Activated B cell treated with CpG ODN at 0.5 μM for 24 hours (primary cell): ENCODE measurements at regions of chr22 and their contacts with region 1.

Region 1: DNA sequence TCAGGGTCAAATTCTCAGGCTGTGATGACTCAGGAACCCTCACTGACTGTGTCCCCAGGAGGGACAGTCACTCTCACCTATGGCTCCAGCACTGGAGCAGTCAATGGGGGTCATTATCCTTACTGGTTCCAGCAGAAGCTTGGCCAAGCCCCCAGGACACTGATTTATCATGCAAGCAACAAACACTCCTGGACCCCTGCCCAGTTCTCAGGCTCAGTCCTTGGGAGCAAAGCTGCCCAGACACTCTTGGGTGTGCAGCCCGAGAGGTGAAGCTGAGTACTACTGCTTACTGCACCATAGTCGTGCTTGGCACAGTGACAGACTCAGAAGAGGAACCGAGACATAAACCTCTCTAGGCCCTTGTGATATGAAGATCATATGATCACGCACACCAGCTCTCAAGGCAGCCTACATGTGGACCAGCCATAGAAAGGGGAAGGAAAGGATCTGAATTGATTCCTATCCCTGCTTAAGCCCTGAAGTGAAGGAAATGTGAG is 58.2 kb downstream of the ZNF280B start:
- DNase-seq: peak; percentile 46
- ATAC-seq: peak; percentile 97
- H3K4me3 Mint-ChIP-seq: peak overlapping the region; percentile 63
- H3K27ac Mint-ChIP-seq: peak overlapping the region; percentile 90
- H3K4me1 Mint-ChIP-seq: peaks cover 38% of the 10 kb centered on the region
- H3K27me3 Mint-ChIP-seq: no peaks in the 10 kb centered on the region
- CTCF ChIP-seq: no peak

Region 2: GRCh38 chr22:21567456-21568346 is 882.7 kb before region 1 on chr22 and contains the start of gene UBE2L3:
- CTCF ChIA-PET with region 1: no interaction called
- POLR2A ChIA-PET with region 1: no interaction called
- intact Hi-C with region 1: no loop called
- DNase-seq: peak; percentile 86
- ATAC-seq: peak; percentile 92
- H3K4me3 Mint-ChIP-seq: peak within 1 kb of the TSS; percentile 89
- H3K27ac Mint-ChIP-seq: peak within 1 kb of the TSS; percentile 82
- H3K4me1 Mint-ChIP-seq: peaks cover 44% of the 10 kb centered on the region
- H3K27me3 Mint-ChIP-seq: no peaks in the 10 kb centered on the region
- CTCF ChIP-seq: no peak
- total RNA-seq, gene UBE2L3: 39.8 and 43.3 TPM in 2 replicates

Region 3: DNA sequence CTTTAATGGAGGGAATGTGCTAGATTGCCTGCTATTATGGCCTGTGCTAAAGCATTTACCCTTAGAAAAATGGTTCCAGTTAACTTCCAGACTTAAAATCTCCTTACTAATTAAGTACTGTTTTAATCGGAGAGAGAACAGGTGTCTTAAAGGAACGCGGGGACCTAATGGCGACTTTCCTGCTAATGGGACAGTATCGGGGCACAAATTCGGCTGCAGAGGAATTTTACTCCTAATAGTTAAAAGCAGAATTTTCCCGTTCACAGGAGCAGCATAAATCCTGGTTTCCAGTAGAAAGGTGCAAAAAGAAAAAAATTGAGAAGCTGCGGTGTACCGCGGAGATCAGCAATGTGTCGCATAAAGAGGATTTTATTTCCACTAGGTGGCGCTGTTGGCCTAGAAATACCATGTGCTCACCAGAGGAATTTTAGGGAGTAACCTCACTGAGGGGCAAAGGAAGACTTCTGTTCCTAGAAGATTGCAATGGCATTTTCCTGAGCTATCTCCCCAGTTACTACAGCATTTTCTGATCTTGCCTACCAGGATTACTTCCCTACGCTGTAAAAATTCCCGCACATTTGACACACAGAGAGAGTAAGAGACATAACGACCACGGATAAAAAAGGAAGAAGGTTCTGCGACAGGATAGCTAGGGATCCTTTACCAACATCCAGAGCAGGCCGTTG is 13.6 kb after region 1 on chr22:
- CTCF ChIA-PET with region 1: interaction called, 20 read pairs
- POLR2A ChIA-PET with region 1: interaction called, 3 read pairs
- intact Hi-C with region 1: no loop called
- DNase-seq: no peak
- ATAC-seq: peak; percentile 61
- H3K4me3 Mint-ChIP-seq: peak overlapping the region; percentile 24
- H3K27ac Mint-ChIP-seq: peak overlapping the region; percentile 61
- H3K4me1 Mint-ChIP-seq: peaks cover 19% of the 10 kb centered on the region
- H3K27me3 Mint-ChIP-seq: peaks cover 4% of the 10 kb centered on the region
- CTCF ChIP-seq: peak; percentile 76